Activated CD4-positive, alpha-beta memory T cell treated with anti-CD3 and anti-CD28 coated beads for 36 hours (primary cell): ENCODE measurements at regions of chr17 and their contacts with region 1.

Region 1: DNA sequence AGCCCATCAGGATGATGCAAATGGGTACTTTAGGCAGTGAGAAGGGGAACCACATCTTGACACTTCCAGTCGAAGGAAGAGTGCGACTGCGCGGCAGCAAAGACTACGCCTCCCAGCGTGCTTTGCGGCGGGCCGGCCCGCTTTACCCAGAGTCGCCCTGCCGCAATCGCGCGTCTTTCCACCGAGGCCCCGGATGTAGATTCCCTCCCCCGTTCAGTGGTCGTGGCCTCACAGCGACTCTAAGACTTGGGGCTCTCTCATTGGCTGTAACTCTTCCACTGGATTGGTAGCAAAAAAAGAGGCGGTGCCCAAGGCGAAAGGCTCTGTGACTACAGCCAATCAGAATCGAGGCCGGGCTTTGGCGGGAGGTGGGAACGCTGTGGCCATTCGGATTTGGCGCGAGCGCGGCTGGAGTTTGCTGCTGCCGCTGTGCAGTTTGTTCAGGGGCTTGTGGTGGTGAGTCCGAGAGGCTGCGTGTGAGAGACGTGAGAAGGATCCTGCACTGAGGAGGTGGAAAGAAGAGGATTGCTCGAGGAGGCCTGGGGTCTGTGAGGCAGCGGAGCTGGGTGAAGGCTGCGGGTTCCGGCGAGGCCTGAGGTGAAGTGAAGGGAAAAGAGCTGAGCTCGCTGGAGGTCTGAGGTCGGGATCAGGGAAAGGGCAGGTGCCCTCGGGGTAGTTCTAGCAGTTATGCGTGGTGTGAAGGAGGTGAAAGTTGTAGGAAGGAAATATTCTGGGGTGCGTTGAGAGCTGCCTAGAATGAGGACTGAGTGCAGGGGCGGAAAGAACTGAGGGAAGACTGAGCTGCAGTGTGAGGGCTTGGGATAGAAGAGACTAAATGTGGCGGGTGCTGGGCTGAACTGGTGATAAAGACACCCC is at the start of gene CDC6:
- DNase-seq: peak; percentile 100
- H3K4me3 Mint-ChIP-seq: peak within 1 kb of the TSS; percentile 99
- H3K27ac Mint-ChIP-seq: peak within 1 kb of the TSS; percentile 94
- H3K4me1 Mint-ChIP-seq: peaks cover 56% of the 10 kb centered on the region
- H3K27me3 Mint-ChIP-seq: no peaks in the 10 kb centered on the region
- total RNA-seq, gene CDC6: 95.6 to 95.7 TPM

Region 2: GRCh38 chr17:40019140-40019991 is 268.4 kb before region 1 on chr17:
- CTCF ChIA-PET with region 1: no interaction called
- POLR2A ChIA-PET with region 1: no interaction called
- intact Hi-C with region 1: loop called (anchors 10 kb)
- DNase-seq: no peak
- H3K4me3 Mint-ChIP-seq: no peak overlapping the region
- H3K27ac Mint-ChIP-seq: no peak overlapping the region
- H3K4me1 Mint-ChIP-seq: no peaks in the 10 kb centered on the region
- H3K27me3 Mint-ChIP-seq: no peaks in the 10 kb centered on the region

Region 3: DNA sequence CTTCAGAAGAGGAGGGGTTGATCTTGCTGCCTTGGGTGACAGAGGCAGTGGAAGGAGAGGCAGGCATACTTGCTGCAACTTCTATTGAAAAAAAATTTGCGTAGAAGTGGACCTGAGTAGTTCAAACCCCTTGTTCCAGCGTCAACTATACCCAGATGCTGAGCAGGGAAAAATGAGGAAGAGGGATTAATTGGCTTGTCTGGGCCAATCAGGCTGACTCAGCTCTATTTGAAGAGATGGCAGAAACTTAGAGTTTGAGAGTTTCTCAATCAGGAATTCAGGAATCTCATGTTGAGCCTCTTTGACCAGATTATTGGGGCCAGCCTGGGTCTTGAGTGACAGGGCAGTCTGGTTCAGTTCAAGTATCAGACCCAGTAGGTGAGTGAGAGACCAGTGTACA is 129.8 kb before region 1 on chr17:
- CTCF ChIA-PET with region 1: no interaction called
- POLR2A ChIA-PET with region 1: interaction called, 3 read pairs
- intact Hi-C with region 1: loop called (anchors 1 kb)
- DNase-seq: no peak
- H3K4me3 Mint-ChIP-seq: no peak overlapping the region
- H3K27ac Mint-ChIP-seq: peak overlapping the region; percentile 50
- H3K4me1 Mint-ChIP-seq: peaks cover 44% of the 10 kb centered on the region
- H3K27me3 Mint-ChIP-seq: no peaks in the 10 kb centered on the region

Region 4: GRCh38 chr17:40219073-40219860 is 68.5 kb before region 1 on chr17 and contains the start of gene WIPF2:
- CTCF ChIA-PET with region 1: interaction called, 14 read pairs
- POLR2A ChIA-PET with region 1: interaction called, 13 read pairs
- intact Hi-C with region 1: loop called (anchors 1 kb)
- DNase-seq: peak; percentile 99
- H3K4me3 Mint-ChIP-seq: peak within 1 kb of the TSS; percentile 86
- H3K27ac Mint-ChIP-seq: peak within 1 kb of the TSS; percentile 92
- H3K4me1 Mint-ChIP-seq: peaks cover 27% of the 10 kb centered on the region
- H3K27me3 Mint-ChIP-seq: no peaks in the 10 kb centered on the region
- total RNA-seq, gene WIPF2: 19.0 to 20.6 TPM

Region 5: DNA sequence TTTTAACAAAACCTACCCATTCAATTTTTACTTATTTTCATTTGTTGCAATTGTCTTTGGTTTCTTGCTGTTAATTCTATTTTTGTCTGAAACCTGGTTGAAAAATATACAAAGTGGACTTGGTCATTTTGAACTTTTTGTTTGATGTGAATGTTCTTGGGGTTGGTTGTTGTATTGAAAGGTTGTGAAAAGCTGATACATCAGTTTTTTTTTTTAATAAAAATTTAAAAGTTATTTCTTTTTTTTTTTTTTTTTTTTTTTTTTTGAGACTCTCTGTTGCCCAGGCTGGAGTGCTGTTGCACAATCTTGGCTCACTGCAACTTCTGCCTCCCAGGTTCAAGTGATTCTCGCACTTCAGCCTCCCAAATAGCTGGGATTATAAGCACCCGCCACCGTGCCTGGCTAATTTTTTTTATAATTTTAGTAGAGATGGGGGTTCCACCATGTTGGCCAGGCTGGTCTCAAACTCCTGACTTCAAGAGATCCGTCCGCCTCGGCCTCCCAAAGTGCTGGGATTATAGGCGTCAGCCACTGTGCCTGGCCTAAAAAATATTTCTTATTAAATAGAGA is 39.7 kb before region 1 on chr17:
- CTCF ChIA-PET with region 1: no interaction called
- POLR2A ChIA-PET with region 1: no interaction called
- intact Hi-C with region 1: no loop called
- DNase-seq: no peak
- H3K4me3 Mint-ChIP-seq: no peak overlapping the region
- H3K27ac Mint-ChIP-seq: no peak overlapping the region
- H3K4me1 Mint-ChIP-seq: peaks cover 19% of the 10 kb centered on the region
- H3K27me3 Mint-ChIP-seq: no peaks in the 10 kb centered on the region

Region 6: DNA sequence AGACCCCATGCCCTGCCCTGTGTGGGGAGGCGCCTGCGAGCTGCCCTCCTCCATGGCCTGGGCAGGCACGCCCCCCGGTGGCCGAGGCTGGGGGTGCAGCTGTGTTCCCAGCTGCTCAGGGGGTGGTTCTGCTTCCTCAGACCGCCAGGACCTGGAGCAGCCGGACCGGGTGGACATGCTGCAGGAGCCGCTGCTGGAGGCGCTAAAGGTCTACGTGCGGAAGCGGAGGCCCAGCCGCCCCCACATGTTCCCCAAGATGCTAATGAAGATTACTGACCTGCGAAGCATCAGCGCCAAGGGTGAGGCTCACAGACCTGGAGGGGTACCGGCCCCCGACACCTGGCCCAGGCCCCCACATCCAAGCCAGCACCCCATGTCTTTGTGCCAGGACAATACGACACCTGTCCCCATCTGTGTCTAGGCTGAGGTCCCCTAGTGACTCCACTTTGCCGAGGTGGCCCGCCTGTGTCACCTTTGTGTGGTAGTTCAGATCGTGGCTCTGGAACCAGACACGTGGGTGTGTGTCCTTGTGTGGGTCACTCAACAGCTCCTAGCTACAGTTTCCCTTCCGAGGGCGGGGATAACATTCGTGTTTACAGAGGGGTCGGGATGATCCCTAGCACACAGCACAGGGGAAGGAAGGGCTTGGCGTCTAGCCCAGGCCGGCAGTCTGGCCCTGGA is 67.5 kb after region 1 on chr17:
- CTCF ChIA-PET with region 1: interaction called, 10 read pairs
- POLR2A ChIA-PET with region 1: no interaction called
- intact Hi-C with region 1: no loop called
- DNase-seq: peak; percentile 83
- H3K4me3 Mint-ChIP-seq: no peak overlapping the region
- H3K27ac Mint-ChIP-seq: no peak overlapping the region
- H3K4me1 Mint-ChIP-seq: peaks cover 17% of the 10 kb centered on the region
- H3K27me3 Mint-ChIP-seq: no peaks in the 10 kb centered on the region